Right ventricle myocardium superior (tissue), 1 donor: ENCODE measurements at regions of chr1 and their contacts with region 1.

Region 1: DNA sequence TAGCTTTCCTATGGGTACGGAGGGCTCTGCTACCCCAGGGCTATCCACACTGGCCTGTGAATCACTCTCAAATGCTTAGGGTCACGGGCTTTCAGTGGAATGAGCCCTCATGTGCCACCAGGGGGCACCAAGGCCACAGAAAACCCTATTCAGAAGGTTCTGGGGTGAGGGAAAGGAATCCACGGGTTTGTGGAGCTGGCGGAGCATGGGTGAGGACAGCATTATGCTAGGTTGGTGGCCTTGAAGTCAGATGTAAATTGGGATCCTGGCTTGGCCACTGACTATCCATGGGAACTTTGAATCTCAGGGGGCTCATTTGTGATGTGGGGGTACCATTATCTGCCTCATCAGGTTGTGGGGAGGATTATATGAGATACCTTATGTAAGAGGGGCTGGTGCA is 5.1 kb upstream of the LAMTOR5 start:
- DNase-seq: peak; percentile 76
- ATAC-seq: peak; percentile 73

Region 2: DNA sequence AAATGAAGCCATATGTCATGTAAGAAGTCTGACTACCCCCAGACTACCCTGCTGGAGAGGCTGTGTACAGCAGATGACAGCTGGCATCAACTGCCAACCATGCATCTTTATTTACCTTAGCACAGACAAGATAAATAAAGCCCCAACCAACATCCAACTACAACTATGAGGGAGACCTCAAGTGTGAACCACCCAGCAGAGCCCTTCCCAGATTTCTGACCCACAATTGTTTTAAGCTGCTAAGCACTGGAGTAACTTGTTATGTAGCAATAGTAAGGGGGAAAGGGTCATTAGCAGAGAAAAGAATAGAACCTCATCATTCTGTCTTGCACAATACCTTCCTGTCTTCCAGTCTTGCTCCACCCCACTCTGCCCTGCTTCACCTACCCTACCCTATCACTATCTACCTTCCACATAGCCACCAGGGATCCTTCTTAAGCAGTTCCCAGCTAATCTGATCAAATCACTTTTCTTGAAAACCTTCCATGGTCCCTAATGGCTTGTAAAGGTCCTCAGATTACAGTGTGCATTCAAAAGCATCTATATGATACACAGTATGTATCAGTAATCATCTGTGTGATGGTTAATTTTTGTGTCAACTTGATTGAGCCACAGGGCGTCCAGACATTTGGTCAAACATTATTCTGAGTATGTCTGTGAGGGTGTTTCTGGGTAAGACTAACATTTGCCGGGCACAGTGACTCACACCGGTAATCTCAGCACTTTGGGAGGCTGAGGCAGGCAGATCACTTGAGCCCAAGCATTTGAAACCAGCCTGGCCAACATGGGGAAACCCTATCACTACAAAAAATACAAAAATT is 93.0 kb before region 1 on chr1:
- intact Hi-C with region 1: no loop called
- DNase-seq: no peak
- ATAC-seq: no peak

Region 3: DNA sequence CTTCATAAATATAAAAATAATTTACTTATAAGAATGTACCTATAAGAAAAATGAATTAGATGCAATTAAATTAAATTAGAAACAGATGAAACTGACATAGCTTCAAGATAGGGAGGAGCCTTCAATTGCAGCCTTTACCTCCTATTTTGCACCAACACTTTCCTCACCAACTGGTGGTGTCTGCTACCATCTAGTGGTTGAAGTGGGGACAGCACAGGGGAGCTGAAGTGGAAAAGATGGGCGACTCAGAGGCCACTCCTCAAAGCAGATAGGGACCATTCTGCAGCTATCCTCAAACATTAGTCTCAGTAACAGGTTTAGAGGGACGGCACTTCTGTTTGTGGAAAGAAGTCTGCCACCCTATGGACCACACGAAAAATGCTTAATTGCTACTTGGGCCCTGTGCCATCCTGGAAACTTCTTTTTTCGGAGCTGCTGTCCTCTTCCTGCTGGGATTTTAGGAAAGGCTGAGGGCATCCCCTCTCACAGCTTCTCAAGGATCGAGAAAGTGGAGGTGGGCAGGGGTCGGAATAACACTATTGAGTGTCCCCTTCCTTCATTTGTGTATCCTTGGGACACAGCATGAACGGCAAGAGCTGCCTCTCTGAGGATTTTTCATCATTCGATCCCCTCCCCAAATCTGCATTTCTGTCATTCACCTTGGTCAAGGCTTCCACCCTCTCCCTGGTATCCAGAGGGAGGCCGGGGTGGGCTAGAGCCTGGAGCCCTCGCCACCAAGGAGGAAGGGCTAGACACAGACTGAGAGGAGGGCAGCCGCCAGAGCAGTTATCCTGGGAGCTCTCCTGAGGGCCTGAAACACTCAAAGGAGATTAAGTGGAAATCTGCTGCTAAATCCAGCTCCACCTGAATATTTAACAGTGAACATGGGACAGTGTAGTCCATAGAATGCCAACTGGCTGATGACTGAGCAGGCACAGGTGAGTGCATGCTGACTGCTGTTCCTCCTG is 48.0 kb after region 1 on chr1:
- intact Hi-C with region 1: loop called (anchors 2 kb)
- DNase-seq: peak; percentile 74
- ATAC-seq: peak; percentile 88

Region 4: DNA sequence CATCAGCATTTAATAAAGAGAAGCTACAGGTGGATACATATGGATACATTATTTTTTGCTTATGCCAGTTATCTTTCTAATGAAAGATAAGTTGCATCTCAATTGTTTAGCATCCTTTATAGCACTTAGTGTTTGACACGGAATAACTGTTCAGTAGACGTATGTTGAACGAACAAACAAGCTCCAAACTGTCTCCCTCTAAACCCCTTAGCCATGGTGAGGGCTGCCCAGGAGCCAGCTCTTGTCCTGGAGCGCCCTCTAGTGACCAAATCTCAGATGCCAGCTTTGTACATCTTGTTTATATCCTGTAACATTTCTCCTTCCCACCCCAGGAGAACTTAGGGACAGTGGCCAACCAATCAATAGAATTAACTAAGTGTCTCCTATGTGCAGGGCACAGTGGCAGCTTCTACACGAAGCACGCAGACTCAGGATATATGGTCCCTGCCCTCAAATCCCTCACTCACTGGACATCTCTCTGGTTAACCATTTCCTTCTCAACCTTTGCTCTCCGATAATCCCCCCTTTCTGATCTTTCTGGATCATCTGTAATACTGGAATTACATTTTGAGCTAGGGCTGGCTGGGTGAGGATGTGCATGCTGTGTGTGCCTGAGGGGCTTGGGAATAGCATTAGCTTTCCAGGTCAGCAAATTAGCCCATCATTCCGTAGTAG is 83.5 kb after region 1 on chr1:
- intact Hi-C with region 1: loop called (anchors 10 kb)
- DNase-seq: peak; percentile 79
- ATAC-seq: peak; percentile 91

Region 5: GRCh38 chr1:110686188-110686587 is 273.6 kb after region 1 on chr1:
- intact Hi-C with region 1: no loop called
- DNase-seq: no peak
- ATAC-seq: no peak